ENCODE measurements at regions of chr1 and their contacts with region 1.

Region 1: GRCh38 chr1:209576798-209577197 is 6.7 kb upstream of the CAMK1G start:
- DNase-seq: peak; percentile 83
- H3K4me3 Mint-ChIP-seq: no peak overlapping the region
- H3K27ac Mint-ChIP-seq: no peak overlapping the region
- H3K4me1 Mint-ChIP-seq: no peaks in the 10 kb centered on the region
- H3K27me3 Mint-ChIP-seq: no peaks in the 10 kb centered on the region

Region 2: GRCh38 chr1:209590405-209590804 is 13.6 kb after region 1 on chr1:
- CTCF ChIA-PET with region 1: interaction called, 11 read pairs
- intact Hi-C with region 1: no loop called
- DNase-seq: no peak
- H3K4me3 Mint-ChIP-seq: no peak overlapping the region
- H3K27ac Mint-ChIP-seq: no peak overlapping the region
- H3K4me1 Mint-ChIP-seq: no peaks in the 10 kb centered on the region
- H3K27me3 Mint-ChIP-seq: peaks cover 12% of the 10 kb centered on the region

Region 3: GRCh38 chr1:209607102-209607794 is 30.4 kb after region 1 on chr1:
- CTCF ChIA-PET with region 1: interaction called, 9 read pairs
- intact Hi-C with region 1: loop called (anchors 2 kb)
- DNase-seq: peak; percentile 88
- H3K4me3 Mint-ChIP-seq: peak overlapping the region; percentile 51
- H3K27ac Mint-ChIP-seq: peak overlapping the region; percentile 86
- H3K4me1 Mint-ChIP-seq: peaks cover 11% of the 10 kb centered on the region
- H3K27me3 Mint-ChIP-seq: no peaks in the 10 kb centered on the region

Region 4: GRCh38 chr1:209710847-209711246 is 134.0 kb after region 1 on chr1:
- CTCF ChIA-PET with region 1: no interaction called
- intact Hi-C with region 1: no loop called
- DNase-seq: no peak
- H3K4me3 Mint-ChIP-seq: no peak overlapping the region
- H3K27ac Mint-ChIP-seq: peak overlapping the region; percentile 94
- H3K4me1 Mint-ChIP-seq: peaks cover 78% of the 10 kb centered on the region
- H3K27me3 Mint-ChIP-seq: no peaks in the 10 kb centered on the region

Region 5: GRCh38 chr1:209989525-209989924 is 412.7 kb after region 1 on chr1:
- CTCF ChIA-PET with region 1: interaction called, 3 read pairs
- intact Hi-C with region 1: loop called (anchors 5 kb)
- DNase-seq: no peak
- H3K4me3 Mint-ChIP-seq: no peak overlapping the region
- H3K27ac Mint-ChIP-seq: no peak overlapping the region
- H3K4me1 Mint-ChIP-seq: no peaks in the 10 kb centered on the region
- H3K27me3 Mint-ChIP-seq: peaks cover 15% of the 10 kb centered on the region

Measured in activated naive CD4-positive, alpha-beta T cell treated with anti-CD3 and anti-CD28 coated beads for 36 hours (primary cell).